IMR-90 (cell line): ENCODE measurements at regions of chr2 and their contacts with region 1.

Region 1: GRCh38 chr2:38146275-38146906 is 70.4 kb upstream of the CYP1B1 start:
- DNase-seq: peak; percentile 95
- ATAC-seq: peak; percentile 72
- H3K4me3 ChIP-seq: no peak overlapping the region
- H3K27ac ChIP-seq: peak overlapping the region; percentile 95
- H3K4me1 ChIP-seq: peaks cover 12% of the 10 kb centered on the region
- H3K27me3 ChIP-seq: no peaks in the 10 kb centered on the region
- CTCF ChIP-seq: no peak
- POLR2A ChIP-seq: no peak; the same call in 1 of the 2 replicates
- RAD21 ChIP-seq: no peak

Region 2: GRCh38 chr2:38076606-38077430 is 69.6 kb before region 1 on chr2:
- CTCF ChIA-PET with region 1: no interaction called
- POLR2A ChIA-PET with region 1: no interaction called
- dilution Hi-C with region 1: no loop called
- in situ Hi-C with region 1: no loop called
- intact Hi-C with region 1: loop called (anchors 1 kb)
- DNase-seq: peak; percentile 90
- ATAC-seq: peak; percentile 83
- H3K4me3 ChIP-seq: peak overlapping the region; percentile 35
- H3K27ac ChIP-seq: peak overlapping the region; percentile 57
- H3K4me1 ChIP-seq: no peaks in the 10 kb centered on the region
- H3K27me3 ChIP-seq: peaks cover 30% of the 10 kb centered on the region
- CTCF ChIP-seq: 0 out of 2 replicates have a peak, but pooled peaks have one; percentile 16
- POLR2A ChIP-seq: peak; percentile 66
- RAD21 ChIP-seq: no peak; the same call in 1 of the 2 replicates

Region 3: DNA sequence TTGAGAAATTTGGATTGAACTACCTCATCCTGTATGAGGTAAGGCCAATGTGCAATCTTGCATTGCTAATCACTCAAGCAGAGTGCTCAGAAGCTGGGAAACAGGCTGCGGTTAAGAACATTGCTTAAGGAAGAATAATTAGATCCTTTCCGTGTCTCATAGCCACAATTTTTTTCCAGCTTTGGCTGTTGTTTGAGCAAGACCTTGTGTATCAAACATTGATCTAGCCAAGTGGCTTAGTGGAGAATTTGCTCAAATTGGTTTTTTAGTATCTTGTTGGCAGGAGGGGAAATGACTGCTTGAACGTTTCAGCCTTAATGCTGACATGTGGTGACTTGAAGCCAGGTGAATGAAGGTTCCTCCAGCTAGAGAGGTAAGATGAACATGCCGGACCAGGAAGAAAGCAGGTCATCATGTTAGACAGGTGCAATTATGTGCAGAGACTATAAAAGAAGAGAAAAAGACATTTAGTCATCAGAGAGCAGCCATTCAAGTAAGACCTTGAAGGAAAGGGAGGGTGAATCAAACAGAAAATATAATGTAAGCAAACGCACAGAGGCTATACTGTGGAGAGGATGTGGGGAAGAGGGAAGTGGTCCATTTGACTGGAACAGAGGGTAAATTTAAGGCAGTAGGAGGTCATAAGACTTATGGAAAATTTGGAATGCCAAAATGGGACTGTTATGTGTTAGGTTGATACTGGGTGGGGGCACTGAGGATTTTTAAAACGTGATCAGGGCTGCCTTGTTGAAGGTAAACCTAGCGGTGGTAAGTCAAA is 28.4 kb after region 1 on chr2:
- CTCF ChIA-PET with region 1: no interaction called
- POLR2A ChIA-PET with region 1: no interaction called
- dilution Hi-C with region 1: no loop called
- in situ Hi-C with region 1: no loop called
- intact Hi-C with region 1: loop called (anchors 2 kb)
- DNase-seq: peak; percentile 98
- ATAC-seq: peak; percentile 64
- H3K4me3 ChIP-seq: no peak overlapping the region
- H3K27ac ChIP-seq: peak overlapping the region; percentile 99
- H3K4me1 ChIP-seq: peaks cover 25% of the 10 kb centered on the region
- H3K27me3 ChIP-seq: no peaks in the 10 kb centered on the region
- CTCF ChIP-seq: no peak
- POLR2A ChIP-seq: no peak
- RAD21 ChIP-seq: no peak